ENCODE measurements at regions of chr12 and their contacts with region 1.

Region 1: DNA sequence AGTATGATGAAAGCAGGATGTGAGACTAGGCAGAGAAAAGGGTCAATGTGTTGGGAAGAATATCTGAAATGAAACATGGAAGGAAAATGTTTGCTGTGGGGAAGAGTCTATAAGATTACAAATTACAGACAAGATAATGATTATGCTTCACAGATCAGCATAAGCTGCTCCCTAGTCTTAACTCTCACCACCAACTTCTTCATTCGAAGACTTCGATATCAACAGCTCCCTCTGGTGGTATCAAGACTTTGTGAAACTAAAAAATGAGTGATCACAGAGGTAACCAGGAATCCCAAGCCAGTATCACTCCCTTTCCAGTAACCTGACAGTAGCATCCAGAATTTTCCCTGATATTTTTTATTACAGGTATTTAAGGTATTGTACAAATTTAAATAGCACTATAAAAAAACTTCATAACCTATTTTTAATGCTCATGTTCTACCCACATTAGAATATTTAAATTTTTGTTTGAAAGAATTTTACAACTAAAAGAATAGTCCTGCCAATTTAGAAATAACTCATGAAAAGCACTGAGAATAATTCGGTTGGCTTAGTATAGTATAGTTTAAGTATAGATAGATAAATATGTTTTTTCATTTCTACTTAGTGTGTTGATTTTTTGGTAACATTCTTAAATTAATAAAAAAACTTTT is 84.4 kb downstream of the C2CD5 start:
- H3K4me3 ChIP-seq: no peak overlapping the region
- H3K27ac ChIP-seq: no peak overlapping the region
- H3K4me1 ChIP-seq: no peaks in the 10 kb centered on the region
- CTCF ChIP-seq: peak; percentile 29; the same call in 1 of the 2 replicates

Region 2: GRCh38 chr12:22083167-22083566 is 376.8 kb before region 1 on chr12:
- CTCF ChIA-PET with region 1: interaction called, 10 read pairs
- POLR2A ChIA-PET with region 1: interaction called, 5 read pairs
- H3K4me3 ChIP-seq: no peak overlapping the region
- H3K27ac ChIP-seq: no peak overlapping the region
- H3K4me1 ChIP-seq: no peaks in the 10 kb centered on the region
- CTCF ChIP-seq: no peak; the same call in 1 of the 2 replicates

Region 3: DNA sequence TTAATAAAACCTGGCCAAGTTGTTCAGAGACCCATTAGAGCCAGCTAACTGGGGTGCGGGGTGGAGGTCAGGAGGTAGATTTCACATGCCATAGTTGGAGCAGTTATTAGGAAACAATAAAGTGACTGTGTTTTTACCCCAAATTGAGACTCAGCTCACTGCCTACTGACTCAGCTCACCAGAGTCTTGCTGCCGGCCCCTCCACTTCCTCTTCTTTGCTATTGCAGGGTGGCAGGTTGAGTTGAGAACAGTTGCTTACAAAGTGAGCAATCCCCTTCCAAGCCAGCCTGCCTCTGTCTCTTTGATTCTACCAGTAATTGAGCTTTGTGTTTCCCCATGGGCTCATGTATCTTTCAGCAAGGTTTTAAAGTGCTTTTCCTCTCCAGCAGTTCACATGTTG is 138.3 kb before region 1 on chr12:
- CTCF ChIA-PET with region 1: no interaction called
- POLR2A ChIA-PET with region 1: no interaction called
- H3K4me3 ChIP-seq: no peak overlapping the region
- H3K27ac ChIP-seq: no peak overlapping the region
- H3K4me1 ChIP-seq: no peaks in the 10 kb centered on the region
- CTCF ChIP-seq: no peak

Region 4: GRCh38 chr12:22505826-22506225 is 45.9 kb after region 1 on chr12:
- CTCF ChIA-PET with region 1: no interaction called
- POLR2A ChIA-PET with region 1: no interaction called
- H3K4me3 ChIP-seq: no peak overlapping the region
- H3K27ac ChIP-seq: no peak overlapping the region
- H3K4me1 ChIP-seq: no peaks in the 10 kb centered on the region
- CTCF ChIP-seq: no peak